ENCODE measurements at regions of chr16 and their contacts with region 1.

Region 1: DNA sequence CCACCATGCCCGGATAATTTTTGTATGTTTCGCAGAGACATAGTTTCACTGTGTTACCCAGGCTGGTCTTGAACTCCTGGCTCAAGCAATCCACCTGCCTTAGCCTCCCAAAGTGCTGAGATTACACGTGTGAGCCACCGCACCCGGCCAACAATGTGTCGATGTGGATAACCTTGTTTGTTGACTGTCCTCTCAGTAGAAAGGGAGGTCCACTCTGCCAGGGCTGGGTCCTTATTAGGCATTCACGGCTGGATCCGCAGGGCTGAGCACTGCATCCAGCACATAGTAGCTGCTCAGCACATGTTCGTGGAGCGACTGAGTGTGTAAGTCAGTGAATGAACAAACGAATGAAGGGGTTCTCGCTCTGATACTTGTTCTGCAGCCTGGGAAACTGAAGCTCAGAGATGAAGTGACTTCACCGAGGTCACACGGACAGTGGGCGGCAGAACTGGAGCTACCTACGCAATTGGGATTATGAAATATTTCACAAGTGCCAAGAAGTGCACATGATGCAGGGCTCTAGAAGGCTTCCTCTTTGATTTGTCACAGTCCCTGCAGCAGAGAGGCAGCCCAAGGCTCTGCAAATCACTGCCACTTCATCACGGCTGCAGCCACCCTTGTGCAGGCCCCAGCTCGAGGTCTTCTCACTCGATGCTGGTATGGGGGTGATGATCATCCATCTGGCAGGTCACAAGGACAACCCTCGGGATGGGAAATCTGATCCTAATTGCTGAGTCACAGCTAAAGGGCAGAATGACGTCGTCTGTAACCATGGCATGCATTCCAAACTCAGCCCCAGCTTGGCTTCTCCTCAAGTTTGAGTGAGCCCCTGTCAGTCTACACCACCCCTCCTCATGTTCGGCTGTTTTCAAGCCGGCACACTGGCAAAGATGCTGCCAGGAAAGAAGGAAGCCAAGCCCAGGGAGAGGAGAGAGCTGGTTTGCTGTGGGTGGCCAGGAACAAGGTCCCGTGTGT is 28.0 kb upstream of the SNN start:
- DNase-seq: peak; percentile 100
- ATAC-seq: peak; percentile 92
- H3K4me3 ChIP-seq: no peak overlapping the region
- H3K27ac ChIP-seq: peak overlapping the region; percentile 84
- H3K4me1 ChIP-seq: peaks cover 13% of the 10 kb centered on the region
- H3K27me3 ChIP-seq: no peaks in the 10 kb centered on the region
- CTCF ChIP-seq: no peak
- POLR2A ChIP-seq: peak; percentile 80
- RAD21 ChIP-seq: peak; percentile 32; the same call in 1 of the 2 replicates

Region 2: DNA sequence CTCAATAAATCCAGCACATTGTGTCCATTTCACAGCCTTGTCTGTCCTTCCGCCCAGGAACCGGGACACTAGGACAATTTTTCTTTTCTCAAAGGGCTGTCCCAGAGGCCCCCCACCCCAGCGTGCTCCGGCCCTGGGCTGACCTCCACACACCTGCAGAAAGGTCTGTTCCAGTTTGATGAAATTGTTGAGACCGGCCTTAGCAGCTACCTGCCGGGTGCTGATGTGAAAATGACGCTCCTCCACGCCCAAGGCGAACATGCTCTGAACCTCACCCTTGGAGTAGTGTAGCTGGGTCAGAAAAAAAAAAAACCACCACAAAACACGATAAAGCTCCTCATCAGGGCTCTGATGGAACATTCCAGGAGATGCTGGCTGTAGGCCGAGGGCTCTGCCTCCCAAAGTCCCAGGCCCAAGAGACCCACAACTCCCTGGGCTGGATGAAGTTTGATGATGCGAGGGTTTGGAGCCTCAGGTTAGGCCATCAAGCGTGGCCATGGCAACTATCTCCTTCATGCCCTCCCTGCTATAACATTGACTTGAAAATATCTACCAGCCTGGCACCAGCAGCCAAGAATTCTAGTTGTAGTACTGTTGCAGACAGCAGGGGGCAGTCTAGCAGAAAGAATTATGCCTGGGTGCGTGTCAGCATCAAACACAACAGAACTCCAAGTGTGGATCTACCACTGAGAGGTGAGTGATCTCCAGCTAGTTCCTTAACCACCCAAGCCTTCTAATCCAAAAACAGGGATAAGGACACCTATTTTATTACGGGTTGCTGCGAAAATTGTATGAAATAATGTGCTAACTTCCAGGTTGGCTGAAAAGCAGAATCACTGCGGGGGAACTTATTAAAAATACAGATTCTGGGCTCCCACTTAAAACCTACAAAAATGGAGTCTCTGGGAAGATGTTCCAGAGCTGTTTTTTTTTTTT is 232.9 kb before region 1 on chr16:
- CTCF ChIA-PET with region 1: interaction called, 4 read pairs
- POLR2A ChIA-PET with region 1: no interaction called
- dilution Hi-C with region 1: no loop called
- in situ Hi-C with region 1: loop called (anchors 5 kb)
- intact Hi-C with region 1: loop called (anchors 1 kb)
- DNase-seq: peak; percentile 77
- ATAC-seq: peak; percentile 79
- H3K4me3 ChIP-seq: no peak overlapping the region
- H3K27ac ChIP-seq: no peak overlapping the region
- H3K4me1 ChIP-seq: peaks cover 11% of the 10 kb centered on the region
- H3K27me3 ChIP-seq: peaks cover 4% of the 10 kb centered on the region; the same call in 1 of the 2 replicates
- CTCF ChIP-seq: peak; percentile 82
- POLR2A ChIP-seq: no peak
- RAD21 ChIP-seq: peak; percentile 84

Region 3: GRCh38 chr16:11535471-11535870 is 104.7 kb before region 1 on chr16:
- CTCF ChIA-PET with region 1: interaction called, 18 read pairs
- POLR2A ChIA-PET with region 1: interaction called, 3 read pairs
- dilution Hi-C with region 1: no loop called
- in situ Hi-C with region 1: no loop called
- intact Hi-C with region 1: loop called (anchors 1 kb)
- DNase-seq: no peak
- ATAC-seq: no peak
- H3K4me3 ChIP-seq: no peak overlapping the region
- H3K27ac ChIP-seq: no peak overlapping the region
- H3K4me1 ChIP-seq: peaks cover 5% of the 10 kb centered on the region; the same call in 1 of the 2 replicates
- H3K27me3 ChIP-seq: no peaks in the 10 kb centered on the region
- CTCF ChIP-seq: no peak
- POLR2A ChIP-seq: no peak
- RAD21 ChIP-seq: no peak

Region 4: DNA sequence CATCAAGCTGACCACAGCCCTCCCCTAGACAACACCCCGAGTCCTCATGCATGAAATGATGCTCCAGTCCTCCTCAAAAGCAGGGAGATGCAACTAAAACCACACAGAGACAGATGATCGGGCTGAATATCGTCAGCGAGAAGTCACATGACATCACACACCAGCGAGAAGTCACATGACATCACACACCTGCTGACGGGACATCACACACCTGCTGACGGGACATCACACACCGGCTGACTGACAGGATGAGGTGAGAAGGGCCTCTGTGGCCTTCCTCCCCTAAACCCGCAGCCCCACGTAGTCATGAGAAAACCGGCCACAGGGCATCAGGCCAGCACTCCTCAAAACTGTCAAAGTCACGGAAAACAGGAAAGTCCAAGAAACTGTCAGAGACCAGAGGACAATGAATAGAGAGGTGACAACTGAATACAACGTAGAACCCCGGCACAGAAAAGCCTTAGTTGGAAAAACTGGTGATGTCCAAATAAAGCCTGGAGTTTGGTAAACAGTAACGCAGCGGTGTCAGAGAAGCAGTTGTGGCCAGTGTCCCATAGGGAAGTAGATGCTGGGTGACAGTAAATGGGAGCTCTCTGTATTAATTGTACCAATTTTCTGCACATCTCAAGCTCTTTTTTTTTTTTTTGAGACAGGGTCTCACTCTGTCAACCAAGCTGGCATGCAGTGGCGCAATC is 67.8 kb before region 1 on chr16:
- CTCF ChIA-PET with region 1: no interaction called
- POLR2A ChIA-PET with region 1: no interaction called
- dilution Hi-C with region 1: no loop called
- in situ Hi-C with region 1: loop called (anchors 5 kb)
- intact Hi-C with region 1: no loop called
- DNase-seq: no peak
- ATAC-seq: no peak
- H3K4me3 ChIP-seq: no peak overlapping the region
- H3K27ac ChIP-seq: no peak overlapping the region
- H3K4me1 ChIP-seq: peaks cover 2% of the 10 kb centered on the region; the same call in 1 of the 2 replicates
- H3K27me3 ChIP-seq: no peaks in the 10 kb centered on the region
- CTCF ChIP-seq: no peak
- POLR2A ChIP-seq: no peak
- RAD21 ChIP-seq: no peak

Region 5: GRCh38 chr16:11597239-11598101 is 42.7 kb before region 1 on chr16:
- CTCF ChIA-PET with region 1: no interaction called
- POLR2A ChIA-PET with region 1: no interaction called
- dilution Hi-C with region 1: no loop called
- in situ Hi-C with region 1: no loop called
- intact Hi-C with region 1: loop called (anchors 5 kb)
- DNase-seq: no peak
- ATAC-seq: peak; percentile 81
- H3K4me3 ChIP-seq: no peak overlapping the region
- H3K27ac ChIP-seq: peak overlapping the region; percentile 56
- H3K4me1 ChIP-seq: peaks cover 25% of the 10 kb centered on the region
- H3K27me3 ChIP-seq: no peaks in the 10 kb centered on the region
- CTCF ChIP-seq: no peak
- POLR2A ChIP-seq: no peak
- RAD21 ChIP-seq: no peak

Region 6: DNA sequence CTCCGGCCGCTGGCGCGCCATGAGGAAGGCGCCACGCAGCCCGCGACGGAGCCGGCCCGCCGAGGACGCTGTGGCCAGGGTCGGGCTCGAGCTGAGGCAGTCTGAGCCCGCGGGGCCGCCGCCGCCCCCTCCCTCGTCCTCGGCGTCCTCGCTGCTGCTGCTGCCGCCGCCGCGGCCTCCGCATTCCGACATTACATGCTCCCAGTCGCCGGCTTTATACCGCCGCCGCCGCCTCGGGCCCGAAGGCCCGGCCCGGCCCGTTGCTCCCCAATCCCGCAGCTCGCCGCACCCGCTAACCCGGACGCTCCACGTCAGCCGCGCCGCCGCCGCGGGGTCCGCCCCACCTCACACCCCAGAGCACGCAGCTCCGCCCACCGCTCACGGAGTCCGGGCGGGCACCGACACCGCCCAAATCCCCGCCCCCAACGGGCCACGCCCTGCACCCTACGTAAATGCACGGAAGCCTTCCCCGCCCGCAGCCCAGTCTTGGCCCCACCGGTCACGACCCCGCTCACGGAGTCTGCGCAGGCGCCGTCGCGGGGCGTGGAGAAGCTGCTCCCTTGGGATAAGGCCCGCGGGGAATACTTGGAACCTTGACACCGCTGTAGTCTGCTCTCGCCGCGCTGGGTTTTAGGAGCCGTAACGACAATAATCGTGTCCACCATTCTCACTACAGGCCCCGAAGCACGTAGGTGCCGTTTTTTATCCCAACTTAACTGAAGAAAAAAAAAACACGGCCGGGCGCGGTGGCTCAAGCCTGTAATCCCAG is 102.5 kb after region 1 on chr16 and contains the start of gene TXNDC11:
- CTCF ChIA-PET with region 1: no interaction called
- POLR2A ChIA-PET with region 1: no interaction called
- dilution Hi-C with region 1: no loop called
- in situ Hi-C with region 1: no loop called
- intact Hi-C with region 1: no loop called
- DNase-seq: peak; percentile 96
- ATAC-seq: peak; percentile 98
- H3K4me3 ChIP-seq: peak within 1 kb of the TSS; percentile 75
- H3K27ac ChIP-seq: peak within 1 kb of the TSS; percentile 64
- H3K4me1 ChIP-seq: peaks cover 9% of the 10 kb centered on the region
- H3K27me3 ChIP-seq: no peaks in the 10 kb centered on the region
- CTCF ChIP-seq: no peak
- POLR2A ChIP-seq: peak; percentile 98
- RAD21 ChIP-seq: no peak
- total RNA-seq, gene TXNDC11: 23.9 and 25.3 TPM in 2 replicates

Region 7: GRCh38 chr16:11819798-11820197 is 179.6 kb after region 1 on chr16:
- CTCF ChIA-PET with region 1: no interaction called
- POLR2A ChIA-PET with region 1: no interaction called
- dilution Hi-C with region 1: no loop called
- in situ Hi-C with region 1: no loop called
- intact Hi-C with region 1: loop called (anchors 10 kb)
- DNase-seq: no peak
- ATAC-seq: no peak
- H3K4me3 ChIP-seq: no peak overlapping the region
- H3K27ac ChIP-seq: no peak overlapping the region
- H3K4me1 ChIP-seq: no peaks in the 10 kb centered on the region
- H3K27me3 ChIP-seq: no peaks in the 10 kb centered on the region
- CTCF ChIP-seq: no peak
- POLR2A ChIP-seq: no peak
- RAD21 ChIP-seq: no peak

Measured in IMR-90 (cell line).